Activated T-helper 1 cell treated with anti-CD3 and anti-CD28 coated beads, Interleukin-12 subunit alpha, Interleukin-12 subunit beta, Interleukin-2, Interleukin-4 antibody, amounts not matched to agents 30 ng/mL and 10 ng/mL and 1 ng/mL, durations not matched to agents 14 hours and 24 hours and 36 hours (primary cell): ENCODE measurements at regions of chr2 and their contacts with region 1.

Region 1: GRCh38 chr2:99559075-99559662 is 69.4 kb upstream of the REV1 start:
- DNase-seq: peak; percentile 63
- H3K4me3 Mint-ChIP-seq: no peak overlapping the region
- H3K27ac Mint-ChIP-seq: no peak overlapping the region
- H3K4me1 Mint-ChIP-seq: peaks cover 4% of the 10 kb centered on the region
- H3K27me3 Mint-ChIP-seq: peaks cover 17% of the 10 kb centered on the region

Region 2: GRCh38 chr2:99572373-99573164 is 13.4 kb after region 1 on chr2:
- intact Hi-C with region 1: no loop called
- DNase-seq: no peak
- H3K4me3 Mint-ChIP-seq: no peak overlapping the region
- H3K27ac Mint-ChIP-seq: no peak overlapping the region
- H3K4me1 Mint-ChIP-seq: no peaks in the 10 kb centered on the region
- H3K27me3 Mint-ChIP-seq: no peaks in the 10 kb centered on the region

Region 3: DNA sequence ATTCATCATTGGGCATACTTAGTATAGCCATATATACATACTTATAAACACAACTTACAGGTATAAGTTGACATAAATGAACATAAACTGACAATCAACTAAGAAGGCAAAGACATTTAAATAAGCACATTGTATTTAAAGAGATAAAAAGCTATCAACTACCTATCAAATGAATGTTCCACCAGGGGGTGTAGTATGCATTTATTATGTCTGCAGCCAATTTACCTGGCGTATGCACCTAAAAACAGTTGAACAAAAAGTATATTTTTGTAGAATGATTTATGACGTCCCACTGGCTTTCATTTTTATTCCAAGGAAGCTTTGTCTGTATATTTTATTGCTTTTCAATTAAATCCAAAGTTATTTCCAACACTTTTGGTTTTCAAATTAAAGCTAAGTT is 259.7 kb after region 1 on chr2:
- intact Hi-C with region 1: loop called (anchors 5 kb)
- DNase-seq: no peak
- H3K4me3 Mint-ChIP-seq: no peak overlapping the region
- H3K27ac Mint-ChIP-seq: no peak overlapping the region
- H3K4me1 Mint-ChIP-seq: no peaks in the 10 kb centered on the region
- H3K27me3 Mint-ChIP-seq: peaks cover 4% of the 10 kb centered on the region

Region 4: DNA sequence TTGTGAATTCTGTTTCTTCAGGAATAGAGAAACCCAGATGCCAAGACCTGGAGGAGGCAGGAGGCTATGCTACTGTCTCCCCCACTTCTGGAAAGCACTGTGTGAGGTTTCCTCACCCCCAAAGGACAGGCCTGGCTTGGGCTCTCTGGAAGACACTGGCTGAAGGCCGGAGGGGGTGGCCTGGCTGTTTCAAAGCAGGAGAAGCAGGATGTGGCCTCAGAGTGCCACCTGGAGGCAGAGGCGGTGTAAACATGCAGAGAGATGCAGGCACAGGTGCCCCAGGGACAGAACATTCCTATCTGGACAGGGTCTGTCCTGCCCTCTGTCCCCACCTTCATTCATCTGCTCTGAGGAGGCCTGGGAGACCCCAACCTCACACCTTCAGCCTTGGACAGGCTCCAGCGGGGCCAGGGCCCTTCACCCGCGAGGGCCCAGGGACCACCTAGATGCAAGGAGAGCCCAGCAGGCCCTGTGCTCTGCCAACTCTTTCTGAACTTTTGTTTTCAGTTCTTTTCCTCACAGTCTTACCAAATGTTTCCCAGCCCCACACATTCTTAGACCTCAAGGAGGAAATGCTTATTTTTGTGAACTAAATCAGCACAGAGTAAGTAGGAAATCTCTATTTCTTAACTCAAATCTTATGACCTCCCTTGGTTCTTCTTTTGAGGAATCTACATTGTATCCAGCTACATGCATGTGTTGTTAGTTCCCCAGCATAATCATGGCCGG is 683.9 kb after region 1 on chr2:
- intact Hi-C with region 1: loop called (anchors 1 kb)
- DNase-seq: no peak
- H3K4me3 Mint-ChIP-seq: no peak overlapping the region
- H3K27ac Mint-ChIP-seq: no peak overlapping the region
- H3K4me1 Mint-ChIP-seq: no peaks in the 10 kb centered on the region
- H3K27me3 Mint-ChIP-seq: peaks cover 4% of the 10 kb centered on the region

Region 5: DNA sequence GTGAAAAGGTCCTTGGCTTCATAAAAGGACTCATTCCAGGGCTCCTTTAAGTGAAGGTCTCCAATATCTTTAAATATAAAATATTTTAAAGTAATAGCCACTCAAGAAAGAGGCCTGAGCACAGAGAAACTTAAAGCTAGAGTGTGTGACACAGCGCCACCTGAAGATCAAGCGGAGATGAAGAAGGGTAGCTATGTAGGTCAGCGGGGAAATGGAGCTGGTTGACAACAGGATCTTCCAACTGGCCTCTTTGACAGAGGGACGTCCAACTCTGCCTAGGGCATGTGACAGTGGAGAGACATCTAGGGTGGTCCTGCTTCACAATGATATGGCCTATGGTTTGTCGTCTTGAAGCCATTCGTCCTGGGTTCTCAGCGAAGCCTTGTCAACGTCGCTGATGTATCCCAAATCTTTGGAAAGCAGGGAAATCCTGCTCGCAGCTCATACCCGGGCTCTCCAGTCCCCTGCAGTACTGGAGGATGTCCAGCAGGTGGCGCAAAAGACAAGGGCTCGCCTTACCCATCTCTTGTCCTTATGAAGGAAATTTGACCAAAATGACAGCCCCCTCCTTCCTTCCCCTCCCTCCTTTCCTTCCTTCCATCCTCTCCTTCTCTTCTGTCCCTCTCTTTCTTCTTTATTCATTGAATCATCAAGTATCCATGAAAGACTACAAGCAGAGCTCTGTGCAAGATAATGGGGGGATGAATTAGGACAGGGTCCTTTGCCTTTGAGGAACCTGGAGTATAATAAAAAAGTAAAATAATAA is 703.6 kb after region 1 on chr2:
- intact Hi-C with region 1: loop called (anchors 5 kb)
- DNase-seq: peak; percentile 22
- H3K4me3 Mint-ChIP-seq: no peak overlapping the region
- H3K27ac Mint-ChIP-seq: no peak overlapping the region
- H3K4me1 Mint-ChIP-seq: no peaks in the 10 kb centered on the region
- H3K27me3 Mint-ChIP-seq: peaks cover 2% of the 10 kb centered on the region

Region 6: DNA sequence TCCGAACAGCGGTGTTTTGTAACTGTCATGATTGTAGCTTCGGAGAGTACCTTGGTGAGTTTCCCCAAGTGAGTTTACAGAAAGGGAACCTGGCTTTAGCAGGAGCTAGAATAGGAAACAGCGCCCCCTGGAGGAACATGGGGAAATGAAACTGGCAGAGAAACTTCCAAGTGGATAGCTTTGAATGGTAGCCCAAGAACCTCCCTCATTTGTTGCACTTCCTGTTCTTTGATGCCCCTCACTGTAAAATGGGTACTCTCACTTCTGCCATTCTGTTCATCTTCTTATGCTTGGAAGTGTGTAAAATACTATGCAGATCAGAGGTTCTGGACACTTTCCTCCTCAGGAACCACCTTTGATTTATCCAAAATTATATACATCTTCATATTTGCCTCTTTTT is 822.1 kb after region 1 on chr2:
- intact Hi-C with region 1: loop called (anchors 1 kb)
- DNase-seq: peak; percentile 56
- H3K4me3 Mint-ChIP-seq: no peak overlapping the region
- H3K27ac Mint-ChIP-seq: no peak overlapping the region
- H3K4me1 Mint-ChIP-seq: peaks cover 6% of the 10 kb centered on the region
- H3K27me3 Mint-ChIP-seq: peaks cover 7% of the 10 kb centered on the region